ENCODE measurements at regions of chr2 and their contacts with region 1.

Region 1: DNA sequence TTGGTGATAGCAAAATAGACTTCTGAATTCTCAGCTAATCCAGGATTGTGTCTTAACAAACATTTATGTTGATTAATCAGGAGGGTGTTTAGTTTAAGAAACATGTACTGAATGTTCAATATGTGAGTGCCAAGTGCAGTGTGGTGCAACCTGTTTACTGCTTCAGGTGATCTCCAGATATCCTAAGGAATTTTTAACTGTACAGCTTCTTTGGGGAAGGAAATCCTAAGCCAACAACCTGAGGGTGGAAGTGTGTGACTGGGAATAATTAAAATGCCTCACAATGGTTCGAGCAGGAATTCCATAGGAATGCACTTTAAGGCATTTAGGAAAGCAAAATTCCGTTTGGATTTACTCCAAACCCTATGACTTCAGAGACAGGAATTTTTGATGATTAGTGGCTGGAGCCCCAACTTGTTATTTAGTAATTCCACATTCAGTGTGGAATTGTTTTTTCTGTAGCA is 16.4 kb downstream of the CRIM1 start:
- DNase-seq: no peak
- H3K4me3 ChIP-seq: no peak overlapping the region
- H3K27ac ChIP-seq: no peak overlapping the region
- H3K4me1 ChIP-seq: peaks cover 38% of the 10 kb centered on the region
- H3K27me3 ChIP-seq: no peaks in the 10 kb centered on the region
- CTCF ChIP-seq: no peak
- EP300 ChIP-seq: no peak
- POLR2A ChIP-seq: no peak

Region 2: GRCh38 chr2:36197181-36197971 is 174.6 kb before region 1 on chr2:
- intact Hi-C with region 1: no loop called
- DNase-seq: no peak
- H3K4me3 ChIP-seq: no peak overlapping the region
- H3K27ac ChIP-seq: no peak overlapping the region
- H3K4me1 ChIP-seq: no peaks in the 10 kb centered on the region
- H3K27me3 ChIP-seq: no peaks in the 10 kb centered on the region
- CTCF ChIP-seq: no peak
- EP300 ChIP-seq: no peak
- POLR2A ChIP-seq: no peak

Region 3: DNA sequence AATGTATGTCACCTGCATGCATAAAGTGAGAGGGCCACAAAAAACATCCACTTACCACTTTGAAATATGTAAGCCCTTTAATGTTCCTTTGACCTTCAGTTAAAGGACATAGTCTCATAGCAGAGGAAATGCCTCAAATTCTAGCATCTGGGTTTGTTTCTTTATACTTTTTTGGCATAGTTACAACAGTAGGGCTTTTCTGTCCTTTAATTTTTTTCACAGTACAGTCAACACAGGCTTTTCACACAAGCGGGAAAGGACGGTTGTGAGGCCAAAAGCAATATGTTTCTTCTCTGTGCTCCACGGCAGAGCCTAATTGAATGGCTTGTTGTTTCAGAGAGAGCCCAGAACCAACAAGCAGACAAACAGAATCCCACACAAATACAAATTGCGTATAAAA is 41.3 kb after region 1 on chr2:
- intact Hi-C with region 1: loop called in 1 of 4 experiments (anchors 5 kb)
- DNase-seq: no peak
- H3K4me3 ChIP-seq: no peak overlapping the region
- H3K27ac ChIP-seq: no peak overlapping the region
- H3K4me1 ChIP-seq: peaks cover 15% of the 10 kb centered on the region
- H3K27me3 ChIP-seq: no peaks in the 10 kb centered on the region
- CTCF ChIP-seq: no peak
- EP300 ChIP-seq: no peak
- POLR2A ChIP-seq: no peak

Region 4: DNA sequence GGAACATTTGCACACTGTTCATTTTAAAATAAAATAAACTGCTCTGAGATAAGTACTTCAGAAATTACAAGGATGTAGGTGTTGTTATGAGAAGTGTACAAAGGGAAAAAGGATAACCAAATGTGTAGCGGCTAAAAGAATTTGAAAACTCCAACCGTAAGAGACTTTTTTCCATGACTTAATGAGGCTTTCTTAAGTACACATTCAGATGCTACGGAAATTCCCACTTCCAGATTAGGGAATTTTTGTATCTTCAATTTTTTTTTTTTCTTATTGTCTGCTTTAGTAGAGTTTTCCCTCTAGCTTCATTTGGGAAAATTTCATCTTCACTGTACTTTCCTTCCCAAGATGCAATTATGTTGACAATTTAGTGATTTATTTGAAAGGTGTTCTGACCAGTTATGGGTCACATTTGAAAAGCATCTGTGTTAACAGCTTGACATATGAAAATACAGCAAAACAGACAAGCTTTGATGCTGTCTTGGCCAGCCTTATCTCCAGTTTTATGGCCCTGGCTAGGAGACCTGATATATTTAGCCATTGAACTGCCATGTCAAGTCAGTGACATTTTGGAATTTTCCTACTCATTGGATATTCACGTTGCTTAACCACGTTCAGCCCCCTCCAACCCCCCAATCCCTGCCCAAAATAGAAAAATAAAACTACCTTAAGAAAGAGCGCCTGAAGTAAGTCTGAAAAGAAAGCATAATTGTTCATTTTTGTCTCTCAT is 120.4 kb after region 1 on chr2:
- intact Hi-C with region 1: loop called in 1 of 4 experiments (anchors 10 kb)
- DNase-seq: no peak
- H3K4me3 ChIP-seq: no peak overlapping the region
- H3K27ac ChIP-seq: no peak overlapping the region
- H3K4me1 ChIP-seq: peaks cover 2% of the 10 kb centered on the region
- H3K27me3 ChIP-seq: no peaks in the 10 kb centered on the region
- CTCF ChIP-seq: no peak
- EP300 ChIP-seq: no peak
- POLR2A ChIP-seq: no peak

Measured in ovary (tissue), 10 donors.